HCT116 (cell line): ENCODE measurements at regions of chr16 and their contacts with region 1.

Region 1: GRCh38 chr16:57591086-57591869 is 37.2 kb upstream of the ADGRG1 start:
- DNase-seq: peak; percentile 76
- ATAC-seq: peak; percentile 92
- H3K4me3 ChIP-seq: peak overlapping the region; percentile 30 to 54
- H3K27ac ChIP-seq: peak overlapping the region; percentile 42
- H3K4me1 ChIP-seq: peaks cover 11 to 21% of the 10 kb centered on the region in 2 experiments
- H3K27me3 ChIP-seq: no peaks in the 10 kb centered on the region
- CTCF ChIP-seq: peak; percentile 91 to 99 (median 93)
- POLR2A ChIP-seq: no peak
- RAD21 ChIP-seq: peak; percentile 93

Region 2: DNA sequence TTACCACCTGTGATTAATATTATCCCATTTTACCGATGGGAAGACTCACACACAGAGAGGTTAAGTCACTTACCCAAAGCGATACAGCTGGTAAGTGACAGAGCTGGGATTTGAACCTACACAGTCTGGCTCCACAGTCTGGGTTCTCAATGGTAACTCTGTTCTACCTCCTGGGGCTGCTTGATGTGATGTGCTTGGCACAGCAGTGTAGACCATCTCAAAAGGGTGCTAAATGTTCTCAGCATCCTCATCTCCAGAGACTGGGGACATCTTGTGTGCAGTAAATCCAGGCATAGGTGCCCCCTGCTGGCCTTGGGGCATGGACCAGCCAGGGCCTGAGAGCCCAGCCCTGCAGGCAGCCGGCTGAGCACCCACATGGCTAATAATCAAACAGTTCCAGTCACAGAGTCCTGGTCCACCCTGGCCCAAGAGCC is 128.9 kb after region 1 on chr16:
- CTCF ChIA-PET with region 1: no interaction called
- POLR2A ChIA-PET with region 1: no interaction called
- RAD21 ChIA-PET with region 1: no interaction called
- intact Hi-C with region 1: loop called (anchors 1 kb)
- DNase-seq: no peak
- ATAC-seq: peak; percentile 96
- H3K4me3 ChIP-seq: no peak overlapping the region
- H3K27ac ChIP-seq: no peak overlapping the region
- H3K4me1 ChIP-seq: no peaks in the 10 kb centered on the region
- H3K27me3 ChIP-seq: 0 out of 2 replicates have a peak, but pooled peaks cover 7% of the 10 kb centered on the region
- CTCF ChIP-seq: peak; percentile 74 to 86 (median 83)
- POLR2A ChIP-seq: no peak
- RAD21 ChIP-seq: peak; percentile 75

Region 3: GRCh38 chr16:57734925-57735754 is 143.9 kb after region 1 on chr16:
- CTCF ChIA-PET with region 1: interaction called, 9 read pairs
- POLR2A ChIA-PET with region 1: interaction called, 5 read pairs
- RAD21 ChIA-PET with region 1: interaction called, 3 to 5 read pairs
- intact Hi-C with region 1: loop called (anchors 5 kb)
- DNase-seq: peak; percentile 100
- ATAC-seq: peak; percentile 92
- H3K4me3 ChIP-seq: peak overlapping the region; percentile 91 to 96
- H3K27ac ChIP-seq: peak overlapping the region; percentile 79
- H3K4me1 ChIP-seq: peaks cover 8 to 24% of the 10 kb centered on the region in 2 experiments
- H3K27me3 ChIP-seq: no peaks in the 10 kb centered on the region
- CTCF ChIP-seq: no peak
- POLR2A ChIP-seq: peak; percentile 35
- RAD21 ChIP-seq: no peak